Ascending aorta (tissue), 2 donors: ENCODE measurements at regions of chr14 and their contacts with region 1.

Region 1: GRCh38 chr14:21455911-21456667 is at the start of gene CHD8:
- DNase-seq: peak; percentile 99 to 100
- H3K4me3 ChIP-seq: peak within 1 kb of the TSS; percentile 86 to 95
- H3K27ac ChIP-seq: peak within 1 kb of the TSS; percentile 97 to 98
- H3K4me1 ChIP-seq: peaks cover 9 to 11% of the 10 kb centered on the region in 2 donors
- H3K27me3 ChIP-seq: no peaks in the 10 kb centered on the region
- CTCF ChIP-seq: peak; percentile 43 to 59 (median 50)
- total RNA-seq, gene CHD8: 96.0 TPM

Region 2: GRCh38 chr14:20454516-20455354 is 1001.4 kb before region 1 on chr14 and contains the starts of genes APEX1 and OSGEP:
- intact Hi-C with region 1: loop called (anchors 5 kb)
- DNase-seq: peak; percentile 93 to 99
- H3K4me3 ChIP-seq: peak within 1 kb of the TSS; percentile 83 to 99
- H3K27ac ChIP-seq: peak within 1 kb of the TSS; percentile 93 to 97
- H3K4me1 ChIP-seq: peaks cover 7 to 19% of the 10 kb centered on the region in 2 donors
- H3K27me3 ChIP-seq: no peaks in the 10 kb centered on the region
- CTCF ChIP-seq: no peak
- total RNA-seq, gene APEX1: 21.5 TPM
- total RNA-seq, gene OSGEP: 26.7 TPM

Region 3: GRCh38 chr14:21185491-21185890 is 270.6 kb before region 1 on chr14:
- intact Hi-C with region 1: no loop called
- DNase-seq: no peak
- H3K4me3 ChIP-seq: no peak overlapping the region
- H3K27ac ChIP-seq: no peak overlapping the region
- H3K4me1 ChIP-seq: no peaks in the 10 kb centered on the region
- H3K27me3 ChIP-seq: no peaks in the 10 kb centered on the region
- CTCF ChIP-seq: no peak

Region 4: GRCh38 chr14:21269252-21270046 is 186.6 kb before region 1 on chr14 and contains the start of gene HNRNPC:
- intact Hi-C with region 1: loop called (anchors 1 kb)
- DNase-seq: peak; percentile 100
- H3K4me3 ChIP-seq: peak within 1 kb of the TSS; percentile 67 to 95
- H3K27ac ChIP-seq: peak within 1 kb of the TSS; percentile 96 to 98
- H3K4me1 ChIP-seq: peaks cover 13% of the 10 kb centered on the region in 2 donors
- H3K27me3 ChIP-seq: no peaks in the 10 kb centered on the region
- CTCF ChIP-seq: no peak
- total RNA-seq, gene HNRNPC: 303 TPM

Region 5: GRCh38 chr14:21383848-21384493 is 72.1 kb before region 1 on chr14 and contains the start of gene SUPT16H:
- intact Hi-C with region 1: loop called (anchors 1 kb)
- DNase-seq: peak; percentile 89 to 98
- H3K4me3 ChIP-seq: peak within 1 kb of the TSS; percentile 63 to 79
- H3K27ac ChIP-seq: peak within 1 kb of the TSS; percentile 88 to 90
- H3K4me1 ChIP-seq: peaks cover 0 to 16% of the 10 kb centered on the region in 2 donors
- H3K27me3 ChIP-seq: no peaks in the 10 kb centered on the region
- CTCF ChIP-seq: no peak
- total RNA-seq, gene SUPT16H: 13.5 TPM

Region 6: DNA sequence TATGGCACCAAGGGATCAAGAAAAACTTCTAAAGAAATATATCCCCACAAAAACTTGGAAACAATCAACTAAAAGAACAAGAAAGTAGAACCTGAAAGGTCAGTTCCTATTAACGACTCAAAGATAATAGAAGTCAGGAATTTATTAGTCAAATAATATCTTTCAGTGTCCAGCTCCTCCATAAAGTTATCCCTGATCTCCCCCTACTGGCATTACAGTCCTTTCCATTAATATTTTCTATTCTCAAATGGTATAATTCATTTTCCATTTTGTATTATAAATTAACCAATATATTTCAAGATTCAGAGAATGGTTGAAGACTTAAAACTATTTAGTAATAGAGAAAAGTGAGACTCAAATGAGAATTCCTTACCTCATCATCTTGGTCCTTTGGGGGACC is 60.6 kb before region 1 on chr14:
- intact Hi-C with region 1: no loop called
- DNase-seq: no peak
- H3K4me3 ChIP-seq: no peak overlapping the region
- H3K27ac ChIP-seq: no peak overlapping the region
- H3K4me1 ChIP-seq: no peaks in the 10 kb centered on the region
- H3K27me3 ChIP-seq: no peaks in the 10 kb centered on the region
- CTCF ChIP-seq: no peak

Region 7: GRCh38 chr14:21437063-21437901 is 18.8 kb before region 1 on chr14:
- intact Hi-C with region 1: loop called (anchors 1 kb)
- DNase-seq: peak; percentile 95 to 99
- H3K4me3 ChIP-seq: peak overlapping the region; percentile 73 to 89
- H3K27ac ChIP-seq: peak overlapping the region; percentile 86 to 89
- H3K4me1 ChIP-seq: peaks cover 8 to 15% of the 10 kb centered on the region in 2 donors
- H3K27me3 ChIP-seq: no peaks in the 10 kb centered on the region
- CTCF ChIP-seq: no peak

Region 8: GRCh38 chr14:21510735-21511657 is 54.9 kb after region 1 on chr14 and contains the start of gene METTL3:
- intact Hi-C with region 1: loop called (anchors 1 kb)
- DNase-seq: peak; percentile 94 to 99
- H3K4me3 ChIP-seq: peak within 1 kb of the TSS; percentile 80 to 82
- H3K27ac ChIP-seq: peak within 1 kb of the TSS; percentile 78 to 86
- H3K4me1 ChIP-seq: peaks cover 8 to 12% of the 10 kb centered on the region in 2 donors
- H3K27me3 ChIP-seq: no peaks in the 10 kb centered on the region
- CTCF ChIP-seq: no peak
- total RNA-seq, gene METTL3: 45.0 TPM

Region 9: GRCh38 chr14:21557084-21557901 is 101.2 kb after region 1 on chr14:
- intact Hi-C with region 1: loop called (anchors 5 kb)
- DNase-seq: peak in 1 of 2 donors; percentile 90
- H3K4me3 ChIP-seq: peak overlapping the region; percentile 48 to 57
- H3K27ac ChIP-seq: peak overlapping the region; percentile 34 to 41
- H3K4me1 ChIP-seq: peaks cover 0 to 3% of the 10 kb centered on the region in 2 donors
- H3K27me3 ChIP-seq: no peaks in the 10 kb centered on the region
- CTCF ChIP-seq: peak; percentile 61 to 67 (median 64)